ENCODE measurements at regions of chr7 and their contacts with region 1.

Region 1: DNA sequence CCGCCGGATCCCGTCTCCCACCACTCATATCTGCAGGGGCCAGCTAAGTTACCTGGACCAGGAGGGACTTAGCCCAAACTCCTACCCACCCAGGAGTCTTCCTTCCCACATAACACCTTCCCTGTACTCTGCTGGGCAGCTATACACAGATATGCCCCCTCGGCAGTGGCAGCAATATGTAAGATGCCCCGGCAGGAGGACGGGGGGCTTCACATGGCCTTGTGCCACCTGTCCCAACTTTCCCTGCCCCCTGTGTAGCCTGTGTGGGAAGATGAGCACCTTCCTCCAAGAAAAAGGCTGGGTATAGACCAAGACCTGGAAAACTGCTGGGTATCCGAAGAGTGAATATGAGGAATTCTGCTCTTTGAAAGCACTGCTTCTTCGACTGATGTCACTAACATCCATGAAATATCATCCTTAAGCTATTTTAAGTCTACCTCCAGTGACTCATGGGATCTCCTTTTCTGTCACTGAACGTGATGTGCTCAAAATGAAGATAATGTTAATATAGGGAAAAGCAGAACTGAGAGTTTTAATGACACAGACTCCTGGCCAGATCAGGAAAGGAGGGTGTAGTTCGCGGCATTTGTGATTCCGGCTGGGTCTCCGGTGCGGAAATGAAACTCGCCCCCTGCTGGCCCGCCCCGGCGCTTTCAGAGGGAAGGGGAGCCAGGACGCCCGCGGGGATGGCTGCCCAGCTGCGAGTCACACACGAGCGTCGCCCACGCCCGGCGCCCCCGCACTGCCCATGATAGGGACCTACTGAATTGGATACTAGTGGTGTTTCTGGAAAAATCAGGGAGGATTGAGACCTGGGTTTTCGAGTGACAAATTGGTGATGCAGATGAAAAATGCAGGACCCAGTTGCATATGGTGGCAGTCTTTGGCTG is 256.9 kb upstream of the NFE2L3 start:
- DNase-seq: peak; percentile 63
- H3K4me3 ChIP-seq: peak overlapping the region; percentile 43
- H3K27ac ChIP-seq: no peak overlapping the region
- H3K4me1 ChIP-seq: peaks cover 8% of the 10 kb centered on the region
- H3K27me3 ChIP-seq: peaks cover 55% of the 10 kb centered on the region
- CTCF ChIP-seq: peak; percentile 76

Region 2: GRCh38 chr7:26061688-26062150 is 166.6 kb after region 1 on chr7:
- intact Hi-C with region 1: loop called (anchors 2 kb)
- DNase-seq: peak; percentile 41
- H3K4me3 ChIP-seq: no peak overlapping the region
- H3K27ac ChIP-seq: no peak overlapping the region
- H3K4me1 ChIP-seq: no peaks in the 10 kb centered on the region
- H3K27me3 ChIP-seq: peaks cover 67% of the 10 kb centered on the region
- CTCF ChIP-seq: peak; percentile 83

Measured in left ventricle myocardium inferior (tissue), 1 donor.